BJ (cell line): ENCODE measurements at regions of chr7 and their contacts with region 1.

Region 1: DNA sequence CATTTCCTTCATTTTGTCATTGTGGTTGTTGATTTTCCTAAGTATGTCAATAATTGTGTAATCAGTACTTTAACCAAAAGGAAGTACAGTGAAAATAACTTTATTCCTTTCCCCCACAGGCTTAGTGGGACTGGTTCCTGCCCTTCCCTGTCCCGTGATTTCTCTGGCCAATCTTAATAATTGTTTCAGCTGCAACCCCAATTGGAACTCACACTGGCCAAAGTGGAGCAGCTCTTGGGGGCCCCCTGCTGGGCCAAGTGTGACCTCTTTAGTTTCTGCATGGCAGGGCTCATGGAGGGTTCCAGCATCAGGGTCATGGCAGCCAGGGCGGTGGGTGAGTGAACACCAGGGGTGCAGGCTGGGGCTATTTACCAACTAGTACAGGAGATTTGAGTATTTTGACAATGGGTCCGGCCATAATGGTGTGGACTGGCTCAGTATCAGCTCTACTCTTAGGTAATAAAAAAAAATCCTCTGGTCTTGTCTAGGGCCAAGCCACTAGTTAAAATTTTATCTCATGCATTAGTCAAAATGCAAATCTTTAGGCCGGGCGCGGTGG is 31.7 kb downstream of the CYCS start:
- DNase-seq: no peak
- H3K4me3 ChIP-seq: no peak overlapping the region
- H3K27me3 ChIP-seq: no peaks in the 10 kb centered on the region
- CTCF ChIP-seq: peak; percentile 95

Region 2: GRCh38 chr7:24573626-24574338 is 519.6 kb before region 1 on chr7:
- CTCF ChIA-PET with region 1: interaction called, 10 read pairs
- POLR2A ChIA-PET with region 1: no interaction called
- DNase-seq: no peak
- H3K4me3 ChIP-seq: peak overlapping the region; percentile 57
- H3K27me3 ChIP-seq: peaks cover 5% of the 10 kb centered on the region
- CTCF ChIP-seq: no peak

Region 3: DNA sequence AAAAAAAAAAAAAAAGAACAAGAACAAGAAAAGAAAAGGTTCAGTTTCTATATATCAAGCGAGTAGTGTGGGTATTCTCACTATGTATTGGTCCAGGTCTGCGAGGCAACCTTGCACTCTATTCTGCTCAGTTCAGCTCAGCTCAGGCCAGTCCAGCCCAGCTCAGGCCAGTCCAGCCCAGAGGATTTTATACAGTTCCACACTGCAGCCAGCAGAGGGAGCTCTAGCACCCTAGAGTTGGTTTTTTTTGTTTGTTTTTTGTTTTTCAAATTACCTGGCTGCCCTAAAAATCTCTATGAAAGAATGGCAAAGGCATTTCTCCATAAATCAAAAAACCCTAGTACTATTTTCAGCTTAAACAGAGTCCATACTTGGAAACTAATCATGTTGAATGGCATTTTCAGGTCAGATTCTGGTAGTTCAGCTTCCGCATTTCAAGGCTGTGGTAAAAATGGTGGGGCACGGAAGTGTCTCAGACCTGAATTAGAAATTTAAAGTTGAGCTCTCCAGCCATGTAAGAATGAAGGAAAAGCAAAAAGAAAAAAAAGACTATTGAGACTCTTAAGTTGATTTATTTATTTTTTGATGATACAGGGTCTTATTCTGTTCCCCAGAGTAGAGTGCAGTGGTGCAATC is 280.9 kb before region 1 on chr7:
- CTCF ChIA-PET with region 1: interaction called, 355 read pairs
- POLR2A ChIA-PET with region 1: no interaction called
- DNase-seq: no peak
- H3K4me3 ChIP-seq: no peak overlapping the region
- H3K27me3 ChIP-seq: no peaks in the 10 kb centered on the region
- CTCF ChIP-seq: peak; percentile 83

Region 4: GRCh38 chr7:24971333-24972165 is 121.8 kb before region 1 on chr7:
- CTCF ChIA-PET with region 1: interaction called, 106 read pairs
- POLR2A ChIA-PET with region 1: no interaction called
- DNase-seq: peak; percentile 75
- H3K4me3 ChIP-seq: no peak overlapping the region
- H3K27me3 ChIP-seq: no peaks in the 10 kb centered on the region
- CTCF ChIP-seq: no peak

Region 5: GRCh38 chr7:25069900-25070443 is 23.4 kb before region 1 on chr7:
- CTCF ChIA-PET with region 1: interaction called, 32 read pairs
- POLR2A ChIA-PET with region 1: no interaction called
- DNase-seq: peak; percentile 49
- H3K4me3 ChIP-seq: no peak overlapping the region
- H3K27me3 ChIP-seq: no peaks in the 10 kb centered on the region
- CTCF ChIP-seq: peak; percentile 77